Spleen (tissue), 13 donors: ENCODE measurements at regions of chr2 and their contacts with region 1.

Region 1: DNA sequence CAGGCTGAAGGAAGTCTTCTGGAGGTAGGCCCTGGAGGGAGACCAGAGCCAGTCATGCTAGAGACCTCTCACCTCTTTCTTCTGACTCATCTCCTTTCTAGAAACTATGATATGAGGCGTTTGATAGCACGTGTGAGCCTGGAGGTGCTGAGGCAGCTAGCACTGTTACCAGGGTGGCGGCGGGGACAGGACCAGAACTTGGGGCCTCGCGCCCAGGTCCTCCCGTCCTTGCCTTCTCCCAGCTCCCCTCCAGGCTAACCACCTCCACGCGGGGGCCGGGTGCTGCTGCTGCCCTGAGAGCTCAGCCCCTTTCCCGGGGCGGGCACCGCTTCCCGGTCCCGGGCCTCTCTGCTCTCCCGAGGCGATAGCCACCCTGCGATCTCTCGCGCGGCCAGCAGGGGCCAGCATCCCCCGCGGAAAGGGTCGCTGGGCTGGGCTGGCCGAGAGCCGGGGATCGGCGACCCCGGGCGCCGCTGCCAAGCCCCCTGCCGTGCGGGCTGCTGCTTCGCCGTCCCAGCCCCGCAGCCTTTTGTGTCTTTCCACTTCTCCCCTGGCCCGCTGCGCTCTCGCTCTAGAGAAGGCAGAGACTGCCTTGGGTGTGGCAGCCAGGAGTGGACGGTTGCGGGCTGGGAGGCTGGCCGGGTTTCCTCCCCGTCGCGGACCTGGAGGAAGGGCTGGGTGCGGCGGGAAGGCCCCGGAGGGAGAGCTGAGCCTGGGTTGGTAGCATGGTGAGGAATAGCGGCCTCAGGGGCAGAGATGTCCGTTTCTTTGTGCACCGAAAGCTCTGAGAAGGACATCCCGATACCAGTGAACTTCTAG is 49.1 kb downstream of the TMEM17 start:
- DNase-seq: peak; percentile 93
- H3K4me3 ChIP-seq: peak overlapping the region; percentile 39 to 79 (median 47)
- H3K27ac ChIP-seq: peak overlapping the region in 7 of 8 donors; percentile 4 to 77 (median 73)
- H3K4me1 ChIP-seq: peaks cover 4 to 14% (median 12%) of the 10 kb centered on the region in 6 donors
- H3K27me3 ChIP-seq: peaks cover 0 to 17% (median 0%) of the 10 kb centered on the region in 7 donors
- CTCF ChIP-seq: peak; percentile 77 to 98 (median 95)
- POLR2A ChIP-seq: no peak

Region 2: DNA sequence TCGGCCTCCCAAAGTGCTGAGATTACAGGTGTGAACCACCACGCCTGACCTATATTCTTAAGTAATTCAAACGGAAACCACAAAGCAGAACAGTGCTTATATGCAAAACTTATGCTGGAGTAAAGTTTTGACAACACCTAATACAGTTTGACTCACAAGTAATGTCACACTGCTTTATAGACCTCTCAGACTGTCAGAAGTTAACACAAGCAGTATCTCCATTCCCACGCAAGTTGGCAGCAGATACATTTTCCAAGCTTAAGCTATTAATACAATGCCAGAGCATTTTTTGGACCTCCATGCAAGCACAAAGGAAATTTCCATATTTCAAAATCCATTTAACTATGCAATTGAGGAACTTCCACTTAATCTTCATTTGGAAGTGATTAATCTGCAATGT is 1412.3 kb before region 1 on chr2:
- intact Hi-C with region 1: no loop called
- DNase-seq: no peak
- H3K4me3 ChIP-seq: no peak overlapping the region
- H3K27ac ChIP-seq: peak overlapping the region in 2 of 8 donors; percentile 5 to 22
- H3K4me1 ChIP-seq: peaks cover 4 to 26% (median 16%) of the 10 kb centered on the region in 6 donors
- H3K27me3 ChIP-seq: no peaks in the 10 kb centered on the region
- CTCF ChIP-seq: no peak
- POLR2A ChIP-seq: no peak

Region 3: GRCh38 chr2:62774555-62775366 is 317.8 kb after region 1 on chr2:
- intact Hi-C with region 1: loop called (anchors 2 kb)
- DNase-seq: no peak
- H3K4me3 ChIP-seq: no peak overlapping the region
- H3K27ac ChIP-seq: no peak overlapping the region
- H3K4me1 ChIP-seq: peaks cover 0 to 7% (median 2%) of the 10 kb centered on the region in 6 donors
- H3K27me3 ChIP-seq: no peaks in the 10 kb centered on the region
- CTCF ChIP-seq: peak; percentile 41 to 79 (median 67)
- POLR2A ChIP-seq: no peak